WTC11 (cell line): ENCODE measurements at regions of chr11 and their contacts with region 1.

Region 1: GRCh38 chr11:6531267-6531752 is 34.2 kb downstream of the DNHD1 start:
- DNase-seq: no peak
- ATAC-seq: peak; percentile 90
- H3K4me3 Mint-ChIP-seq: no peak overlapping the region
- H3K27ac Mint-ChIP-seq: no peak overlapping the region
- H3K4me1 Mint-ChIP-seq: no peaks in the 10 kb centered on the region
- H3K27me3 Mint-ChIP-seq: no peaks in the 10 kb centered on the region; the same call in 1 of the 2 replicates
- CTCF ChIP-seq: peak; percentile 19; the same call in 1 of the 2 replicates

Region 2: DNA sequence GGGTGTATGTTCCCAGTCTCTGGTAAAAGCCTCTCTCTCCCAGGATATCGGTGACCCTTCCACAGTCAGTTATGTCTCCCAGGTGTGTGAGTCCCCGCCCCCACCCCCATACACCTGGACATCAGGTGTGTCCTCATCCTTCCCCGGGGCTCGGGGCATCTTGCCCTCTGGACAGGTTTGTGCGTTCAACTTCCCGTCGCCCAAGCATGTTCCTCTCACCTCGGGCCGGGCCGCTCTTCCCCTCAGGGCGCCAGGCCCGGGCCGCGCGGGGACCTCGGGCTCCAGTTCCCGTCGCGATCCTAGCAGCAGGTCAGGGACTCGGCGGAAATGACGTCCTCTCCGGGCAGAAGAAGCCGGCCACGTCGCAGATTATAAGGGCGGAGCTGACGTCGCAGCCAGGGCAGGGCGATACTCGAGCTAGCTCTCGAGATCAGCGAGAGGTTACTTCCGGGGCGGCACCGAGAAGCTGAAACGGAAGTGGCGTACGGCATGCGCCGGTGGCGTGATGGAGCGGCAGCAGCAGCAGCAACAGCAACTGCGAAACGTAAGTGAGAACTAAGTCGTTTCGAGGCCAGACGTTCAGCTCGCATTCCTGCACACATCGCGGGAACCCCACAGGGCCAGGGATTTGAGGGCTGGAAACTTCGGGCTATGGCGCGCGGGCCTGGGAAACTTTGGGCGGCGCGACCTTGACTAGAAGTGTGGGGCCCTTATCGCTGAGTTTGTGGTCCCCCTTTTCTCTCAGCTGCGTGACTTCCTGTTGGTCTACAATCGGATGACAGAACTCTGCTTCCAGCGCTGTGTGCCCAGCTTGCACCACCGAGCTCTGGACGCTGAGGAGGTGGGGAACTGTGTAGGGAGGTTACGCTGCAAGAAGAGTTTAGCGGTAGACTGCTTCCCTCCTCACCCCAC is 50.0 kb before region 1 on chr11 and contains the starts of genes ARFIP2 and TIMM10B:
- CTCF ChIA-PET with region 1: interaction called, 11 read pairs
- POLR2A ChIA-PET with region 1: no interaction called
- DNase-seq: peak; percentile 97
- ATAC-seq: peak; percentile 94
- H3K4me3 Mint-ChIP-seq: peak within 1 kb of the TSS; percentile 98
- H3K27ac Mint-ChIP-seq: peak within 1 kb of the TSS; percentile 99
- H3K4me1 Mint-ChIP-seq: peaks cover 18% of the 10 kb centered on the region
- H3K27me3 Mint-ChIP-seq: no peaks in the 10 kb centered on the region
- CTCF ChIP-seq: no peak
- total RNA-seq, gene ARFIP2: 46.0 to 53.1 TPM (median 46.1 TPM) in 3 replicates
- total RNA-seq, gene TIMM10B: 35.8 to 42.6 TPM (median 36.1 TPM) in 3 replicates

Region 3: GRCh38 chr11:6565988-6566703 is 34.8 kb after region 1 on chr11:
- CTCF ChIA-PET with region 1: interaction called, 20 read pairs
- POLR2A ChIA-PET with region 1: no interaction called
- DNase-seq: no peak
- ATAC-seq: no peak
- H3K4me3 Mint-ChIP-seq: no peak overlapping the region
- H3K27ac Mint-ChIP-seq: no peak overlapping the region
- H3K4me1 Mint-ChIP-seq: peaks cover 18% of the 10 kb centered on the region
- H3K27me3 Mint-ChIP-seq: no peaks in the 10 kb centered on the region
- CTCF ChIP-seq: no peak

Region 4: GRCh38 chr11:6594142-6594768 is 62.9 kb after region 1 on chr11:
- CTCF ChIA-PET with region 1: interaction called, 10 read pairs
- POLR2A ChIA-PET with region 1: no interaction called
- DNase-seq: no peak
- ATAC-seq: no peak
- H3K4me3 Mint-ChIP-seq: no peak overlapping the region
- H3K27ac Mint-ChIP-seq: no peak overlapping the region; the same call in 1 of the 2 replicates
- H3K4me1 Mint-ChIP-seq: peaks cover 6% of the 10 kb centered on the region; the same call in 1 of the 2 replicates
- H3K27me3 Mint-ChIP-seq: no peaks in the 10 kb centered on the region
- CTCF ChIP-seq: no peak

Region 5: GRCh38 chr11:6619004-6619745 is 87.9 kb after region 1 on chr11 and contains the start of gene TPP1:
- CTCF ChIA-PET with region 1: interaction called, 11 read pairs
- POLR2A ChIA-PET with region 1: no interaction called
- DNase-seq: peak; percentile 92
- ATAC-seq: peak; percentile 99
- H3K4me3 Mint-ChIP-seq: no peak within 1 kb of the TSS
- H3K27ac Mint-ChIP-seq: no peak within 1 kb of the TSS
- H3K4me1 Mint-ChIP-seq: no peaks in the 10 kb centered on the region
- H3K27me3 Mint-ChIP-seq: no peaks in the 10 kb centered on the region
- CTCF ChIP-seq: no peak
- total RNA-seq, gene TPP1: 36.2 to 51.4 TPM (median 44.8 TPM) in 3 replicates

Region 6: DNA sequence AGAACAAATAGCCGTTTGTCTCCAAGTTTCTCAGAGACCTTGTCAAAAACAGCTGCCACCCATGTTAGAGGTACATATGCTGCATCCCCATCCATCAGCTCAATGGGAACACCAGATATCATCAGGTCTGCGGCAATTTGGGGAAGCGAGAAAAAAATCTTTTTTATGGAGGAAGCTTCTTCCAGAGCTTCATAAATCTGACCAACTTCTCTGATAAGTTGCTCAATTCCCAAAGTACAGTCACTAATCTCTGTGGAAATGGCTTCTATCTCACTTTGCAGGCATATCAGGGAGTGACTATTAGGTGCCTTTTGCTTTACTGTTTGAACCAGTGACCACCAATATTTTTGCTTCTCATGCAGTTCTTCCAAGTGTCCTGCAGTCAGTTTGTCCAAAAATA is 186.1 kb after region 1 on chr11:
- CTCF ChIA-PET with region 1: no interaction called
- POLR2A ChIA-PET with region 1: no interaction called
- DNase-seq: no peak
- ATAC-seq: no peak
- H3K4me3 Mint-ChIP-seq: no peak overlapping the region
- H3K27ac Mint-ChIP-seq: no peak overlapping the region
- H3K4me1 Mint-ChIP-seq: no peaks in the 10 kb centered on the region
- H3K27me3 Mint-ChIP-seq: peaks cover 49% of the 10 kb centered on the region
- CTCF ChIP-seq: no peak